SK-N-SH (cell line): ENCODE measurements at regions of chr12 and their contacts with region 1.

Region 1: GRCh38 chr12:3299929-3300832 is 190.8 kb upstream of the PRMT8 start:
- DNase-seq: peak; percentile 89
- H3K4me3 ChIP-seq: peak overlapping the region; percentile 15 to 56; a peak in 3 of 4 replicates
- H3K27ac ChIP-seq: peak overlapping the region in 1 of 2 experiments; percentile 69; a peak in 2 of 4 replicates
- H3K4me1 ChIP-seq: peaks cover 4 to 39% of the 10 kb centered on the region in 2 experiments; a peak in 3 of 4 replicates
- H3K27me3 ChIP-seq: no peaks in the 10 kb centered on the region
- CTCF ChIP-seq: peak; percentile 93
- EP300 ChIP-seq: peak in 1 of 2 experiments; percentile 51; a peak in 1 of 4 replicates
- RAD21 ChIP-seq: peak; percentile 87

Region 2: GRCh38 chr12:2017546-2018337 is 1282.4 kb before region 1 on chr12:
- CTCF ChIA-PET with region 1: no interaction called
- POLR2A ChIA-PET with region 1: no interaction called
- DNase-seq: no peak
- H3K4me3 ChIP-seq: no peak overlapping the region
- H3K27ac ChIP-seq: peak overlapping the region in 1 of 2 experiments; percentile 47; a peak in 1 of 4 replicates
- H3K4me1 ChIP-seq: peaks cover 0 to 43% of the 10 kb centered on the region in 2 experiments; a peak in 2 of 4 replicates
- H3K27me3 ChIP-seq: no peaks in the 10 kb centered on the region; the same call in 1 of the 2 replicates
- CTCF ChIP-seq: no peak
- EP300 ChIP-seq: no peak
- RAD21 ChIP-seq: no peak

Region 3: GRCh38 chr12:3241621-3242020 is 58.6 kb before region 1 on chr12:
- CTCF ChIA-PET with region 1: no interaction called
- POLR2A ChIA-PET with region 1: no interaction called
- DNase-seq: no peak
- H3K4me3 ChIP-seq: no peak overlapping the region
- H3K27ac ChIP-seq: no peak overlapping the region
- H3K4me1 ChIP-seq: peaks cover 3 to 4% of the 10 kb centered on the region in 2 experiments; a peak in 1 of 4 replicates
- H3K27me3 ChIP-seq: no peaks in the 10 kb centered on the region
- CTCF ChIP-seq: no peak
- EP300 ChIP-seq: no peak
- RAD21 ChIP-seq: no peak

Region 4: GRCh38 chr12:3313675-3314663 is 13.8 kb after region 1 on chr12:
- CTCF ChIA-PET with region 1: interaction called, 156 read pairs
- POLR2A ChIA-PET with region 1: no interaction called
- DNase-seq: peak; percentile 64
- H3K4me3 ChIP-seq: no peak overlapping the region
- H3K27ac ChIP-seq: no peak overlapping the region
- H3K4me1 ChIP-seq: peaks cover 0 to 25% of the 10 kb centered on the region in 2 experiments; a peak in 2 of 4 replicates
- H3K27me3 ChIP-seq: peaks cover 9% of the 10 kb centered on the region; the same call in 1 of the 2 replicates
- CTCF ChIP-seq: peak; percentile 45
- EP300 ChIP-seq: no peak
- RAD21 ChIP-seq: peak; percentile 52

Region 5: GRCh38 chr12:3365463-3366411 is 65.6 kb after region 1 on chr12:
- CTCF ChIA-PET with region 1: interaction called, 36 read pairs
- POLR2A ChIA-PET with region 1: no interaction called
- DNase-seq: peak; percentile 91
- H3K4me3 ChIP-seq: peak overlapping the region in 1 of 2 experiments; percentile 42; a peak in 2 of 4 replicates
- H3K27ac ChIP-seq: no peak overlapping the region
- H3K4me1 ChIP-seq: peaks cover 0 to 6% of the 10 kb centered on the region in 2 experiments; a peak in 1 of 4 replicates
- H3K27me3 ChIP-seq: peaks cover 49% of the 10 kb centered on the region
- CTCF ChIP-seq: no peak
- EP300 ChIP-seq: no peak
- RAD21 ChIP-seq: no peak

Region 6: GRCh38 chr12:3604748-3605586 is 304.8 kb after region 1 on chr12:
- CTCF ChIA-PET with region 1: interaction called, 19 read pairs
- POLR2A ChIA-PET with region 1: no interaction called
- DNase-seq: peak; percentile 79
- H3K4me3 ChIP-seq: no peak overlapping the region
- H3K27ac ChIP-seq: peak overlapping the region in 1 of 2 experiments; percentile 94; a peak in 2 of 4 replicates
- H3K4me1 ChIP-seq: peaks cover 0 to 45% of the 10 kb centered on the region in 2 experiments; a peak in 2 of 4 replicates
- H3K27me3 ChIP-seq: peaks cover 21% of the 10 kb centered on the region
- CTCF ChIP-seq: no peak
- EP300 ChIP-seq: no peak
- RAD21 ChIP-seq: no peak

Region 7: DNA sequence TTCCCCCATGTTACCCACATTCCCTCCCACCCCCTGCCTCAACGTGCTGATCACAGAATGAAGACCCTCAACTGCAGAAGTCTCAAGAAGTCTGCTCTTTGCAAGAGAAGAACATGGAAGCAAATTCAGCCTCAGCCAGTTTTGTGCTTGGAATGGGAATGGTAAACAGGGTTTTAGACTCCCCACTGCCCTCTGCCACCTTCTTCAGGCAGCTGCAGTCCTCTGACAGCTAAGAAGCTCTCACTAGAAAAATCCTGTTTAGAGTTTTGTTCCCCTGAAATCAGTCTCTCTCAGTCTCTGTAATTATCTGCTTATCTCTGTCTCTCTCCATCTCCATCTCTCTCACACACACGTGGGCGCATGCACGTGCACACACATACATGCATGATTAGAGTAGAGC is 367.3 kb after region 1 on chr12:
- CTCF ChIA-PET with region 1: interaction called, 55 read pairs
- POLR2A ChIA-PET with region 1: no interaction called
- DNase-seq: no peak
- H3K4me3 ChIP-seq: no peak overlapping the region
- H3K27ac ChIP-seq: no peak overlapping the region
- H3K4me1 ChIP-seq: peaks cover 0 to 6% of the 10 kb centered on the region in 2 experiments; a peak in 1 of 4 replicates
- H3K27me3 ChIP-seq: no peaks in the 10 kb centered on the region
- CTCF ChIP-seq: peak; percentile 14
- EP300 ChIP-seq: no peak
- RAD21 ChIP-seq: peak; percentile 26

Region 8: DNA sequence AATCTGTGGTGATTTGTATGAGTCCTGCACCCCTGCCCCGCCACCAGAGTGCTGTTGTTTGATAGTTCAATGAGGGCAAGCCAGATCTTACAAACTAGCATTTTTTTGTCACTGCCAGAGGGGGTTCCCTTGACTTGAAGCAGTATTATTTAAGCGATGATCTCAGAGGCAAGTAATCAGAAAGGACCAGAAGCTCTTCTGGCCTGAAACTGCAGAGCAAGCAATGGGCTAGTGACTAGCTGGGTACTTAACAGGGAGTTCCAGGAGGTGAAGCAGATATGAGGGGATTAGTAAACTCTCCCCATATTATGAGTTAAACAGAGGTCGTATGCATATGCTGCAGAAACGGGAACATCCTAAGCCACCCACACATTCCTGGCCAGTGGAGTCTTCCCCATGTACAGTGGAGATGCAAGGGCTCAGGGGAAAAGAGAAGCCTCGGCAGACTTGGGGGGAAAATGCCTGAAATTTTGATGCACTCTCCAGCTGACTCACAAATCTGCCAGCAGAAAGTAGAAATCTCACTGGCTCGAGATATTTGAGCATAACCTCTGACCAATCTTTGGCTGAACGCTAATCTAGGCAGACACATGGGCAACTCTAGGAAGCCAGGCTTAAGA is 461.0 kb after region 1 on chr12:
- CTCF ChIA-PET with region 1: interaction called, 12 read pairs
- POLR2A ChIA-PET with region 1: no interaction called
- DNase-seq: no peak
- H3K4me3 ChIP-seq: no peak overlapping the region
- H3K27ac ChIP-seq: no peak overlapping the region
- H3K4me1 ChIP-seq: no peaks in the 10 kb centered on the region
- H3K27me3 ChIP-seq: no peaks in the 10 kb centered on the region; the same call in 1 of the 2 replicates
- CTCF ChIP-seq: no peak
- EP300 ChIP-seq: no peak
- RAD21 ChIP-seq: no peak

Region 9: GRCh38 chr12:3815094-3815766 is 515.0 kb after region 1 on chr12:
- CTCF ChIA-PET with region 1: interaction called, 231 read pairs
- POLR2A ChIA-PET with region 1: no interaction called
- DNase-seq: no peak
- H3K4me3 ChIP-seq: no peak overlapping the region
- H3K27ac ChIP-seq: no peak overlapping the region
- H3K4me1 ChIP-seq: no peaks in the 10 kb centered on the region
- H3K27me3 ChIP-seq: no peaks in the 10 kb centered on the region
- CTCF ChIP-seq: no peak
- EP300 ChIP-seq: no peak
- RAD21 ChIP-seq: no peak